Right ventricle myocardium inferior (tissue), 1 donor: ENCODE measurements at regions of chr1 and their contacts with region 1.

Region 1: DNA sequence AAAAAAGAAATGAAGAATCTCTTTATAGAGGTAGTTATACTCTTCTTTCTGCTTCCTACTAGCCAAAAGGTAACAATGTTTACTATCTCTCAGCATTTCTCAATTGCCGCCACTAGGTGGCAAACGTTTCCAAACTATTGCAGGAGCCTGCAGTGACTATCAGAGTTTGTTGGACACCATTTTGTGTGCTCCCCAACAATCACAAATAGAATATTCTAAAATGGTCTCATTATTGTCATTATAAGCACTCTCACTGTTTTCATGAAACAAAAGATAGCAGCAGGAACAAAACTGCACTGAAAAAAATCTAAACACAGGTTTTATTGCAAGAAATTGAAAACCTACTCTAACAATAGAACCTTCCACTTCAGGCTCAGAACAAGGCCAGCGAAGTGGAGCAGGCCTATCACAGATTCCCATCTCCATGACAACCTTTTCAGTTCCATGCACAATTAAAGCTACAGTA is 83.9 kb upstream of the PLPPR4 start:
- DNase-seq: no peak
- ATAC-seq: peak; percentile 89

Region 2: GRCh38 chr1:99110140-99111041 is 70.0 kb before region 1 on chr1:
- intact Hi-C with region 1: no loop called
- DNase-seq: no peak
- ATAC-seq: no peak

Region 3: DNA sequence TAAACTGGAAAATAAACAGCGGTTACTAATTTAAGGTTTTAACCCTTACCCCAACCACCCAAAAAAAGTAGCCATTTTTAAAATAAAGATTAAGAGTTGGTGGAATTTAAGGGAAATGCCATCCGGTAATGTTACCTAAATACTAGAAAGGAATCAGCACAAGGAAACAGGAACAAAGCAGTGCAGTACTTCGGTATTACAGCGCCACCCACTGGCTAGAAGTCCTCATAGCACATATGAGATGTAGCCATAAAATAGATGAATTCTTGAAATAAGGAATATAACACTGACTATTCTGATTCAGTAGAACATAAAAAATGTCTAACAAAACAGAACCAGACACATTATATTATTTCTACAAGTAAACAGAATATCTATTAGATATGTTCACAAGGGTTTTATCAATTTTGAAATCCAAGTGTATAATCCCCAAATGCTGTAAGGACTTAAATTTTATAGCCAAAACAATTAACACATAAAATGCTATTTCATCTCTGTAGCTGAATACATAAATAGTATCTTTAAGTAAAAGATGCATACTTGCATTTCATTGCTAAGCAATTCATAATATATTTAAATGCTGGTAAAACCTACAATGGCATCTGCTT is 527.3 kb after region 1 on chr1:
- intact Hi-C with region 1: loop called (anchors 2 kb)
- DNase-seq: no peak
- ATAC-seq: peak; percentile 62

Region 4: GRCh38 chr1:99737016-99737415 is 556.6 kb after region 1 on chr1:
- intact Hi-C with region 1: loop called (anchors 2 kb)
- DNase-seq: no peak
- ATAC-seq: peak; percentile 69